GM10248 (cell line): ENCODE measurements at regions of chr17 and their contacts with region 1.

Region 1: DNA sequence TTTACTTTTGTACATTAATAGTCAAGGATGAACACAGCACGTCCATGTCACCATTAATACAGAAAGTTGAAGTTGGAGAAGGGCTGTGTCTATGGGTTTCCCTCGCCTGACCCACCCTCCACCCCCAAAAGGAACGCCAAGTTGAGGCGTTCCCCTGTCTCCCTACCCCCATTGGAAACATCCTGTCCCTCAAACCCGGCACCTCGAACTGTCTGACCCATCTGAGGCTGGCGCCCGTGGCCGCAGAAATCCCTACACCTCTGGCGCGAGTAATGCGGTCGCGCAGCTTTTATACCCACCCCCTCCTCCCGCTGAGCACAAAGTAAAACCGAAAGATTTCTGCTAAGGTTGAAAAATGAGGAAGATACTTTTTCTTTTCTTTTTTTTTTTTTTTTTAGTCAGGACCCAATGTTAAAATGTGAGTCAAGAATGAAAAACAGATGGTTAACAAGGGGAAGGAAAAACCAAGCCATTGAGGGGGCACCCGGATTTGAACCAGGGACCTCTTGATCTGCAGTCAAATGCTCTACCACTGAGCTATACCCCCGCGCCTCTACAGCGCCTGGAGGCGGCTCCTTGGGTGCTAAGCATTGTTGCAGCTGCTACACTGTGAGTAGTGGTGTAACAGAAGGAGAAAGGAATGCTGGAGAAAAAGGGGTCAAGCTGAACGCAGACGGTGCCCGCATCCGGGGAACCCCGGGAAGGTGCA is 887 bp upstream of the LASP1 start:
- DNase-seq: peak; percentile 79
- CTCF ChIP-seq: peak; percentile 21

Region 2: DNA sequence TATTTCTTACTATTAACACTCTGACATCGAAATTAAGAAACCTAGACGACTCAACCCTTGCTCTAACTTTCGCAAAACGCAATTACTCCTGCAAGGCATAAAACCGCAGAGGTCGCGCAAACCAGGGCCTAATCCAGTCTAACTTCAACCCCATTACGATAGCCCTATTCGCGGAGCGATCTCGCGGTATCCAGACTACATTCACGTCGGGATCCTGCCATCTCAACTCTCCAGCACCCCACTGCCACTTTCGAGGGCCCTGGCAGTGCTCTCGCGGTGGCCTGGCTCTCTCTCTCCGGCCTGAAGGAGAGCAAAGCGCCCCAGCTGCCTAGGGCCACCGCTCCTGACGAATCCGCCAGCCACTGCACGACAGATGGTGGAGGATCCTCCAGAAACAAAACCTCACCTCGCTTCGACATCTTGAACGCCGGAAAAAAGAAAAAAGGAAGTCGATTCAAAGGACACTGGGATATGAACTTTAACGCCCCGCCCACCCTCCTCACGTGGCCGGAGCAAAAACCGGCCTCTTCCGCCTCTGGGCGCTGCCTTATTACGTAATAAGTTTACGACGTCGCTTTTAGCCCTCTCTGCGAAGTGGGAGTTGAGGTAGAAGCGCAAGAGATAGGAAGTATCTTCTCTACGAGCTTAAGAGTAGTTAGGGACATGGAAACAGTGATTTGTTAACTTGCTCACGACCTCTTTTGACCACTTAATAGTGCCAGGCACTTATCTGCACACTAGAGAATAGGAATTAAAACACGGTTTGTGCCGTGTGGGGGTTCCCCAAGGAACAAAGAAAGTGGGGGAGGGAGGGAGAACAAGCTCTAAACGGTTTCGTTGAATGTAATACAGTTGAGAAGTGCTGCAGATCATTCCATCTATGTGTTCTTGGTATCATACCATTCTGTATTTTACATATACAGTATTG is 15.4 kb before region 1 on chr17 and contains the start of gene RPL23:
- CTCF ChIA-PET with region 1: interaction called, 15 read pairs
- POLR2A ChIA-PET with region 1: interaction called, 38 read pairs
- DNase-seq: peak; percentile 93
- CTCF ChIP-seq: no peak

Region 3: GRCh38 chr17:38881600-38882191 is 12.7 kb after region 1 on chr17:
- CTCF ChIA-PET with region 1: interaction called, 11 read pairs
- POLR2A ChIA-PET with region 1: interaction called, 5 read pairs
- DNase-seq: no peak
- CTCF ChIP-seq: no peak